K562 (cell line): ENCODE measurements at regions of chr9 and their contacts with region 1.

Region 1: DNA sequence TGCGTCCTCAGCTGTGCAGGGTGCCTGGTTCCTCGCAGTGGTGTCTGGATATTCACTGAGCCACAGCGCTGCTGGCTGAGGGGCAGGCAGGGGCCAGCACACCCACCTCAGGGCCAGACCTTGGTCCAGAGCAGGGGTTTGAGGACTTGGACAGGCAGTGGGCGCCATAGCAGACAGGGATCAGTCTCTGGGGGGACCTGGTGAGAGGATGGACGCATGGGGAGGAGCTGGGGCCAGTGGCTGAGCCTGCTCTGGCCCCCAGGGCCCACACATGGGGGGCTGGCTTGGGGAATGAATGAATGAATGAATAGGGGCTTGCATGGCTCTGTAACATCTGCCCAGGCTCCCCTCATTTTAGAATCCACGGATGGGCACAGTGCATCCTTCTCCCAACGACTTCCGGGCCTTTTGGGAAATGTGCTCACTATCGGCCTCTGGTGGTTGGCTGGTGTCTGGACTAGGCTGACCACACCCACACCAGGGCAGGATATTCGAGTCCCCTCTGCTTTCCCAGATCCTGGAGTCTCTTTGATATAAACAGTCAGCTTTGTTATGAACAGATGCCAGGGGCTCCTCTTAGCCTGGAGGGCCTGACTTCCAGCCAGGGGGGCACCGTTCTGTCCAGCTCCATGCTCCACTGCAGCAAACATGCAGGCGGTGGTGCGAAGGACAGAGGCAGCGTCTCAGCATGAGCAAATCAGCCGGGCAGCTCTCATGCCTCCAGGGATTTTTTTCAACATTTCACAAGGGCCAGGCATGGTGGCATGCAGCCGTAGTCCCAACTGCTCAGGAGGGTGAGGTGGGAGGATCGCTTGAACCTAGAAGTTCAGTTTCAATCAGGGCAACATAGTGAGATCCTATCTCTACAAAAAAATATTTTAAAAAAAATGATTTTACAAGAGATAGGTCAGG is 62.6 kb downstream of the NEK6 start:
- DNase-seq: peak; percentile 76 to 85 (median 82)
- ATAC-seq: peak; percentile 93
- H3K4me3 ChIP-seq: no peak overlapping the region
- H3K27ac ChIP-seq: no peak overlapping the region
- H3K4me1 ChIP-seq: peaks cover 11 to 24% of the 10 kb centered on the region in 2 experiments
- H3K27me3 ChIP-seq: no peaks in the 10 kb centered on the region
- CTCF ChIP-seq: peak; percentile 84 to 95 (median 90)
- EP300 ChIP-seq: no peak
- POLR2A ChIP-seq: no peak
- RAD21 ChIP-seq: peak; percentile 61 to 79

Region 2: DNA sequence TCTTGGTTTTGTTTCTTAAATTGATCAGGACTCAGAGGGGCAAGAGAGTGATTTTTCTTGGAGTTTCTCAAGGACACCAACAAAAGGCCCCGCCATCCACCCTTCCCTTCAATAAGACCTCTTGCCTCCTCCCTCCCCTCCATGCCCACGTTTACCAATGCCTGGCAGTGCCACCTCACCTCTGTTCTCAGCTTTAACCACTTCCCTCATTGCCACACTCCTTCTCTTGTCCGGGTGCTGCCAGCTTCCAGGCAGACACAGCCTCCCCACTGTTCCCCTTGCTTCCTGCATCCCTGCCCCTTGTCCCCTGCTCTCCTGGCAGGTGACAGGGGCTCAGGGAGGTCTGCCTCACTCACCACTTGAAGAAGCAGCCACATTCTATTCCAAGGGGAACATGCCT is 218.0 kb before region 1 on chr9:
- CTCF ChIA-PET with region 1: no interaction called
- POLR2A ChIA-PET with region 1: no interaction called
- in situ Hi-C with region 1: no loop called
- intact Hi-C with region 1: no loop called
- DNase-seq: no peak
- ATAC-seq: no peak
- H3K4me3 ChIP-seq: no peak overlapping the region
- H3K27ac ChIP-seq: no peak overlapping the region
- H3K4me1 ChIP-seq: no peaks in the 10 kb centered on the region
- H3K27me3 ChIP-seq: peaks cover 21 to 51% of the 10 kb centered on the region in 2 experiments; a peak in 4 of 5 replicates
- CTCF ChIP-seq: no peak
- EP300 ChIP-seq: no peak
- POLR2A ChIP-seq: no peak
- RAD21 ChIP-seq: no peak

Region 3: DNA sequence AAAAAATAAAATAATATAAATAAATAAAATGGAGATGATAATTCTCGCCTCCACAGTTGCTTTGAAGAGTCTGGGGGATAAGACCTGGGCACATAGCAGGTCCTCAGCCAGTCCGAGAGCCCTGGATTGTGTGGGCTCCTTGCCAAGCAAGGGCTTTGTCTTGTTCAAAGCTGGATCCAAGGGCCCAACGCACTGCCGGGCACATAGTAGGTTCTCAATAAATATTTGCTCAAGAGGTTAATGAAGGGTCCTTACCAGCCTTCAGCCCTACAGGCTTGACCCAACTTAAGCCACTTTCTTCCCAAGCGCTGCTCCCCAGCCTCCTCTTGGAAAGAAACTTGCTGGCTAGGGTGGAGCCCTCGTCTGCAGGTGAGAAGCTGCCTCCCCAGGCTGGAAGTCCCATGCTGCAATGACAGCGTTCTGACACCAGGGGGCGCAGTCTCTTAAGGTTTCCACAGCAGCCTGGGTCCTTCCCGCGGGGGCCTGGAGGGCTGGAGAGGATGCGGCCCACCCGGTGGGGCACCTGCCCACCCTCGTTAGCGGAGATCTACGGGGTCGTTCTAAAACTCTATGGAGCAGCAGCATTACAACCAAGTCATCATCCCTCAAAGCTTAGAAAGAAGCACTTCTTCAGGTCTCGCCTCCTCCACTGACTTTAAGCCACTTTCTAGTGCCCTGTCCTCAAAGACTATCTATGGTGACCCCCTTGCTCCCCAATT is 193.6 kb before region 1 on chr9:
- CTCF ChIA-PET with region 1: interaction called, 11 read pairs
- POLR2A ChIA-PET with region 1: no interaction called
- in situ Hi-C with region 1: loop called (anchors 5 kb)
- intact Hi-C with region 1: no loop called
- DNase-seq: peak; percentile 78 to 86 (median 84)
- ATAC-seq: peak; percentile 92
- H3K4me3 ChIP-seq: no peak overlapping the region
- H3K27ac ChIP-seq: no peak overlapping the region
- H3K4me1 ChIP-seq: peaks cover 0 to 11% of the 10 kb centered on the region in 2 experiments; a peak in 3 of 5 replicates
- H3K27me3 ChIP-seq: peaks cover 3 to 16% of the 10 kb centered on the region in 2 experiments; a peak in 3 of 5 replicates
- CTCF ChIP-seq: peak; percentile 91 to 93 (median 91)
- EP300 ChIP-seq: no peak
- POLR2A ChIP-seq: no peak
- RAD21 ChIP-seq: peak; percentile 89 to 94

Region 4: DNA sequence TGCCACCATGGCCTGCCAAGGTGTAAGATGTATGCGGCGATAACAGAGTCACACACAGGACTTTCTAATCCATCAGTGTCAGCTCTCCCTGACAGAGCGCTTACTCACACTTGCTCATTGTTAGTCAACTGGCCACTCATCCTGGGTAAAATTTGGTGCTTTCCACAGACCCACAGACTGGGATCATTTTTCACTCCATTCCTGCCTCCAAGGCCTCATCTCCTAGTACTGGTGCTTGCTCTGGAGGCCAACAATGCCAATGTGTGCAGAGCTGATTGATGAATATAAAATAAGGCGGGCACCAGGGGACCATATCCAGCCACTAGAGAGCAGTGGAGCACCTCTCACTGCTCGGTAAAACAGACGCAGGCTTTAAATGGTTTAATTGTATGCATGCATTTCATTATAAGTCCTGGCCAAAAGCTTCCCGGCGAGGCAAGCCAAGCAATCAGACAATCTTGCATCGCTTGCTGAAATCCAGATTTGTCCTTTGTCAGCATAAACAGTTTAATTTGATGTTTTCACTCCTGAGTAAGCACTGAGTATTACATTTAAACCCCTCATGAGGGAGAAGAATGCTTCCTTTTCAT is 72.6 kb after region 1 on chr9:
- CTCF ChIA-PET with region 1: no interaction called
- POLR2A ChIA-PET with region 1: no interaction called
- in situ Hi-C with region 1: no loop called
- intact Hi-C with region 1: loop called (anchors 5 kb)
- DNase-seq: peak; percentile 47 to 66 (median 52)
- ATAC-seq: peak; percentile 73
- H3K4me3 ChIP-seq: no peak overlapping the region
- H3K27ac ChIP-seq: peak overlapping the region; percentile 16; the same call in 2 of the 3 replicates
- H3K4me1 ChIP-seq: peaks cover 31 to 57% of the 10 kb centered on the region in 2 experiments
- H3K27me3 ChIP-seq: no peaks in the 10 kb centered on the region
- CTCF ChIP-seq: peak; percentile 55 to 77 (median 73)
- EP300 ChIP-seq: no peak; the same call in 1 of the 2 replicates
- POLR2A ChIP-seq: no peak
- RAD21 ChIP-seq: peak; percentile 15 to 42